A673 (cell line): ENCODE measurements at regions of chr6 and their contacts with region 1.

Region 1: GRCh38 chr6:155628306-155628705 is 172.7 kb upstream of the NOX3 start:
- DNase-seq: no peak
- H3K4me3 ChIP-seq: no peak overlapping the region
- H3K27ac ChIP-seq: no peak overlapping the region
- H3K4me1 ChIP-seq: no peaks in the 10 kb centered on the region
- H3K27me3 ChIP-seq: no peaks in the 10 kb centered on the region
- CTCF ChIP-seq: no peak

Region 2: DNA sequence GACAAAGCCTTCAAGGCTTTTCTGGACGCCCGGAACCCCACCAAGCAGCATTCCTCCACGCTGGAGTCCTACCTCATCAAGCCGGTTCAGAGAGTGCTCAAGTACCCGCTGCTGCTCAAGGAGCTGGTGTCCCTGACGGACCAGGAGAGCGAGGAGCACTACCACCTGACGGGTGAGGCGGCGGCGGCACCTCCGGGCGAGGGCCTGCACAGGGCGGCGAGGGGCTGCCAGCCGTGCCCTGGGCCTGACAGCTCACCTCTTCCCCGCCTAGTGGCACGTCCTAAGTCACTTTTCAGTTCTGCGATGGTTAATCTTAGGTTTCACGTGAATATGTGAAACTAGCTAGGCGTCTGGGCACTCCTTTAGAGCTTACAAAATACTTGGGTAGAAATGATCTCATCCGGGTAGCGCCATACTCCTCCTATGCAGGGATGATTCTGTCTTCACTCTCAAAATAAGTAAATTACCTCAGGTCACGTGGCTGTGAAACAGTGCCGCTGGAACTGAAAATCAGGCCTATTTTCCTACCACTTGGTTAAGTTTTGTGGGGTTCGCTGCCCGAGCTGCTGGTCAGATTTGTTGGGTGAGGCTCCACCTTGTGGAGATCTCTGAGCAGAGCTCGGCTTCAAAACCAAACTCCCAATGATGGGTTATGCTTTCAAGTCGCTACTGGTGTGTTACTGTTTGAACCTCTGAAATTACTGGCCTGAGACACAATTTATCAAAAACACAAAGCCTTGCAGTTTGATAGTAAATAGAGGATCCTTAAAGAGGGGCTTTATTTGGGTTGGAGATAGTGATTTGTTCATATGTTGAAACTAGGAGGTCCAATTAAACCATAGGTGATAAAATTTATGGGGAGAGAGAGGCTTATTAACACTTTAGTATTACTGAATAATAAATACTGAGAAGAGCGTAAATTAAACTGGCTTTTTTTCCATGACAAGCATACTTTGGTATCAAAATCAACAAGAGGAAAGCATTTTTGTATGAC is 380.0 kb before region 1 on chr6:
- CTCF ChIA-PET with region 1: no interaction called
- POLR2A ChIA-PET with region 1: no interaction called
- intact Hi-C with region 1: no loop called
- DNase-seq: peak; percentile 61
- H3K4me3 ChIP-seq: no peak overlapping the region
- H3K27ac ChIP-seq: no peak overlapping the region
- H3K4me1 ChIP-seq: no peaks in the 10 kb centered on the region
- H3K27me3 ChIP-seq: no peaks in the 10 kb centered on the region
- CTCF ChIP-seq: peak; percentile 74

Region 3: DNA sequence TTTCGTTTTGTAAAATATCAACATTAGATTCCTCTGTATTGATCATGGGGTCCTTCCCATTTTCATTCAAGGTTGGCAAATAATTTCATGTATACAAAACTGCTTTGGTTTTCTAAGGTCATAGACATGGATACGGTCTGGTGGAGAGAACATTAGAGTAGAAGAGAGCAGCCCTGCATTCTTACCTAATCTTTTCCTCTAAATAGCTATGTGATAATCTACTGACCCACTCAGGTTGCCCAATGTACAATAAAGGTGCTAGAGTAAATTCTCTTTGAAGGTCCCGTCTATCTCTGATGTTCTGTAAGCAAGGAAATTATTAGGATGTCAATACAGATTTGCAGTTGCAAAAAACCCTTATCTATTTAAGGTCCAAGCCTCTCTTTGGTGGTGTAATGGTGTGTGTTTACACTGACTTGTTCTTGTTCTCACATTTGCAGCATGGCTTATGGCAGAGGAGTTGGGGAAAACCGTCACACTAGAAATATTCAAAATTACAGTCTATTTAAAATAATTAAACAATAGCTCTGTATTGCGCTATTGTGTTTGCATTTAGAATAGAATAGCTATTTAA is 141.5 kb before region 1 on chr6:
- CTCF ChIA-PET with region 1: no interaction called
- POLR2A ChIA-PET with region 1: interaction called, 13 read pairs
- intact Hi-C with region 1: no loop called
- DNase-seq: no peak
- H3K4me3 ChIP-seq: no peak overlapping the region
- H3K27ac ChIP-seq: no peak overlapping the region
- H3K4me1 ChIP-seq: peaks cover 5% of the 10 kb centered on the region
- H3K27me3 ChIP-seq: no peaks in the 10 kb centered on the region
- CTCF ChIP-seq: no peak

Region 4: GRCh38 chr6:155660251-155660977 is 32.1 kb after region 1 on chr6:
- CTCF ChIA-PET with region 1: no interaction called
- POLR2A ChIA-PET with region 1: no interaction called
- intact Hi-C with region 1: no loop called
- DNase-seq: no peak
- H3K4me3 ChIP-seq: no peak overlapping the region
- H3K27ac ChIP-seq: no peak overlapping the region
- H3K4me1 ChIP-seq: no peaks in the 10 kb centered on the region
- H3K27me3 ChIP-seq: no peaks in the 10 kb centered on the region
- CTCF ChIP-seq: no peak

Region 5: DNA sequence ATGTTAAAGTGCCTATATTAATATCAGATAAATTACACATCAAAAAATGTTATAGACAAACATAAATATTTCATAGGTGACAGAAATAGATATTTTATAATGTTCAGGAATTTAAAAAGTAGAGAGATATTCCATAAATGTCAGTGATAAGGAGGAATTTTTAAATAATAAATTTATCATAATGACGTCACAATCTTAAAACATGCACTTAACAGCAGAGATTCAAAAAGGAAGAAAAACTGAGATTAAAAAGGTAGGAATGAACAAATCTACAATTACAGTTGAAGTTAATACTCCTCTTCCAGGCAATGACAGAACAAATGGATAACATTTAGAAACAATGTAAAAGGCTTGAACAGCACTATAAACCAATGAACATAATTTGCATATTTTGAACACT is 172.7 kb after region 1 on chr6:
- CTCF ChIA-PET with region 1: no interaction called
- POLR2A ChIA-PET with region 1: no interaction called
- intact Hi-C with region 1: no loop called
- DNase-seq: no peak
- H3K4me3 ChIP-seq: no peak overlapping the region
- H3K27ac ChIP-seq: no peak overlapping the region
- H3K4me1 ChIP-seq: no peaks in the 10 kb centered on the region
- H3K27me3 ChIP-seq: no peaks in the 10 kb centered on the region
- CTCF ChIP-seq: no peak

Region 6: GRCh38 chr6:155970876-155971708 is 342.8 kb after region 1 on chr6:
- CTCF ChIA-PET with region 1: no interaction called
- POLR2A ChIA-PET with region 1: no interaction called
- intact Hi-C with region 1: no loop called
- DNase-seq: no peak
- H3K4me3 ChIP-seq: no peak overlapping the region
- H3K27ac ChIP-seq: no peak overlapping the region
- H3K4me1 ChIP-seq: no peaks in the 10 kb centered on the region
- H3K27me3 ChIP-seq: no peaks in the 10 kb centered on the region
- CTCF ChIP-seq: no peak

Region 7: DNA sequence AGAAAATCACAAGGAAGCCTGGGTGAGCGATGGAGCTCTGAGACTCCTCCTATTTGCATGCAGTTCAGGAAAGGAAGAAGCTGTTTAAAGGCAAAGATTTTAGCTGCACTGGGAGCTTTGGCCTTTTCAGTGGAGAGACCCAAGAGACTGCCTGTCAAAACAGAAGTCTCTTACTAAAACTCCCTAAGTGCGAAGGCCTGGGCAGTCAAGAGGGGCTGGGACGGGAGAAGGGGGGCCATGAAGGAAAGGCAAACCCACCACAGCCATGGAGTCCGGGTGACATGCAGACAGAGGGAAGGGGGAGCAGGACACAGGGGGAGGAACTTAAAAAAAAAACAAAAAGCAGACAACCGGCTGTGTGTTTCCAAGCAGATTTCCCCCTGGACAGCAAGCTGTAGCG is 364.9 kb after region 1 on chr6:
- CTCF ChIA-PET with region 1: no interaction called
- POLR2A ChIA-PET with region 1: interaction called, 18 read pairs
- intact Hi-C with region 1: no loop called
- DNase-seq: no peak
- H3K4me3 ChIP-seq: no peak overlapping the region
- H3K27ac ChIP-seq: no peak overlapping the region
- H3K4me1 ChIP-seq: no peaks in the 10 kb centered on the region
- H3K27me3 ChIP-seq: no peaks in the 10 kb centered on the region
- CTCF ChIP-seq: no peak